T-cell (primary cell): ENCODE measurements at regions of chr16 and their contacts with region 1.

Region 1: GRCh38 chr16:67339453-67339852 is 12.8 kb downstream of the LRRC36 start:
- DNase-seq: peak in 1 of 35 experiments; percentile 10
- ATAC-seq: no peak
- H3K4me3 ChIP-seq: no peak overlapping the region
- H3K4me3 Mint-ChIP-seq: no peak overlapping the region
- H3K27ac ChIP-seq: no peak overlapping the region
- H3K27ac Mint-ChIP-seq: no peak overlapping the region
- H3K4me1 ChIP-seq: no peaks in the 10 kb centered on the region
- H3K4me1 Mint-ChIP-seq: no peaks in the 10 kb centered on the region
- H3K27me3 ChIP-seq: peaks cover 0 to 9% of the 10 kb centered on the region in 2 experiments
- H3K27me3 Mint-ChIP-seq: peaks cover 0 to 11% of the 10 kb centered on the region in 2 donors

Region 2: GRCh38 chr16:67350324-67350723 is 10.9 kb after region 1 on chr16:
- CTCF ChIA-PET with region 1: no interaction called
- POLR2A ChIA-PET with region 1: no interaction called
- DNase-seq: no peak
- ATAC-seq: no peak
- H3K4me3 ChIP-seq: no peak overlapping the region
- H3K4me3 Mint-ChIP-seq: no peak overlapping the region
- H3K27ac ChIP-seq: no peak overlapping the region
- H3K27ac Mint-ChIP-seq: no peak overlapping the region
- H3K4me1 ChIP-seq: no peaks in the 10 kb centered on the region
- H3K4me1 Mint-ChIP-seq: no peaks in the 10 kb centered on the region
- H3K27me3 ChIP-seq: no peaks in the 10 kb centered on the region
- H3K27me3 Mint-ChIP-seq: peaks cover 0 to 1% of the 10 kb centered on the region in 2 donors

Region 3: DNA sequence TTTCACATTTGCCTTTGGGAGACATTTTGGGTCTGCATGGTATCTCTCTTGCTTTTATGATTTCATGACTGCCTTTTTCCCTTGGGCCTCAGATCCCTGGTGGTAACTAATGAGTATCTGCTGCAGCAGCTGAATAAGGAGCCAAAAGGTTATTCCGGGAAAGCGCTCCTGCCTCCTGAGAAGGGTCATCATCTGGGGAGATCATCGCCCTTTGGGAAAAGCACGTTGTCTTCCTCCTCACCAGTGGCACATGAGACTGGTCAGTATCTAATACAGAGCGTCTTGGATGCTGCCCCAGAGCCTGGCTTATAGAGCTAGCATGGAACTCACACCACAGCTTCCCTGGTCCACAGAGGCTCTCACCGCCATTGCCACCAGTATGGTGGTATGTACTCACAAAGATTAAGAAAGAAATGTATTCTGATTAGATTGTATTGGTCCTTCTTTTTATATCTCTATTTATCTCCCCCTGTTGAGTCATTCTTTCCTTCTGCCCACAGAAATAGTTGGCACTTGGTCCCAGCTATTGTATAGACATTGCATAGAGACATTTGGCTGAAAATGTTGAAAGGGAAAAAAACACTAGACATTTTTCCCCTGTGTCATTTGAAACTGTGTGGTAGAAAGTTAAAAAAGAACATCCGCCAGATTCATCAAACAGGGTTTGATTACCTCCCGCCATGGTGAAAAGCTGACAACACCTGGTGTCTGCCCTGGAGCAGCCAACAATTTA is 45.5 kb after region 1 on chr16:
- CTCF ChIA-PET with region 1: interaction called in 1 of 2 experiments, 11 read pairs
- POLR2A ChIA-PET with region 1: no interaction called
- DNase-seq: no peak
- ATAC-seq: no peak
- H3K4me3 ChIP-seq: no peak overlapping the region
- H3K4me3 Mint-ChIP-seq: no peak overlapping the region
- H3K27ac ChIP-seq: no peak overlapping the region
- H3K27ac Mint-ChIP-seq: no peak overlapping the region
- H3K4me1 ChIP-seq: no peaks in the 10 kb centered on the region
- H3K4me1 Mint-ChIP-seq: no peaks in the 10 kb centered on the region
- H3K27me3 ChIP-seq: no peaks in the 10 kb centered on the region
- H3K27me3 Mint-ChIP-seq: peaks cover 0 to 2% of the 10 kb centered on the region in 2 donors

Region 4: GRCh38 chr16:67632415-67633172 is 293.1 kb after region 1 on chr16:
- CTCF ChIA-PET with region 1: no interaction called
- POLR2A ChIA-PET with region 1: no interaction called
- DNase-seq: no peak
- ATAC-seq: no peak
- H3K4me3 ChIP-seq: no peak overlapping the region
- H3K4me3 Mint-ChIP-seq: no peak overlapping the region
- H3K27ac ChIP-seq: no peak overlapping the region
- H3K27ac Mint-ChIP-seq: peak overlapping the region in 1 of 2 donors; percentile 49
- H3K4me1 ChIP-seq: no peaks in the 10 kb centered on the region
- H3K4me1 Mint-ChIP-seq: no peaks in the 10 kb centered on the region
- H3K27me3 ChIP-seq: no peaks in the 10 kb centered on the region
- H3K27me3 Mint-ChIP-seq: no peaks in the 10 kb centered on the region